Activated CD8-positive, alpha-beta T cell treated with anti-CD3 and anti-CD28 coated beads, Interleukin-2, amount 10 ng/mL, durations not matched to agents 7 days and 5 days (primary cell): ENCODE measurements at regions of chr18 and their contacts with region 1.

Region 1: DNA sequence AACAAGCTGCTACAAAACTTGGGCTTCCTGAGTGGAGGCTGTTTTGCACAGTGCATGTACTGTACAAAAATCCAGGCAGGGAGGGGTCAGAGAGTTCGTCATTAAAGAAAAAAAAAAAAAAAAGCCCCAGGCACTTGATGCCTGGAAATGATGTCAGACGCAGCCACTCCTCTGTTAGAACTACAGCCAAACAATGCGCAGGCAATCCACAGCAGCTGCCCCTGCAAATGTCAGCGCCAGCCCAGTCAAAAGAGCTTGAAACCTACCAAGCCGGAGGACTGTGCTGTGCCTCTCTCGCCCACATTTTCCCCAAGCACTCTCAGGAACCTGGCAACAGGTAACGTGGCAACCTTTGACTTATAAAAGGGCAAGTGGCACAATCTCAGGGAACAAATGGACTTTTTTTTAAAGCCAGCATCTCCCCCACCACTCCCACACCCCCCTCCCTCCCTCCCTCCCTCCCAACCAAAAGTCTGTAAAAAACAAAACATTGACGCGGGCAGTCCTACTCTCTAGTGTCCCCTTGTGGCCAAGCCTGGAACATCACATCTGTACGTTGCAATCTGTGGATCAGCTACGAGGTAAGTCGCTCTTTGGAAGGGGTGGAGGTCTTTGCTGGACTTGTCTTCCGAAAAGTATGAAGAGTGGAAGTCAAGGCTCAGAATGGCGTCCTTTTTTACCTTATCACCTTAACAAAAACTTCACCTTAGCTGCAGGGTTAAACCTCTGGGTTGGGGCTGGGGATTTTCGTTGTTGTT is 144.1 kb downstream of the TGIF1 start:
- DNase-seq: peak; percentile 92
- ATAC-seq: peak; percentile 92
- H3K4me3 Mint-ChIP-seq: peak overlapping the region; percentile 93
- H3K27ac Mint-ChIP-seq: peak overlapping the region; percentile 98
- H3K4me1 Mint-ChIP-seq: peaks cover 54% of the 10 kb centered on the region
- H3K27me3 Mint-ChIP-seq: no peaks in the 10 kb centered on the region

Region 2: DNA sequence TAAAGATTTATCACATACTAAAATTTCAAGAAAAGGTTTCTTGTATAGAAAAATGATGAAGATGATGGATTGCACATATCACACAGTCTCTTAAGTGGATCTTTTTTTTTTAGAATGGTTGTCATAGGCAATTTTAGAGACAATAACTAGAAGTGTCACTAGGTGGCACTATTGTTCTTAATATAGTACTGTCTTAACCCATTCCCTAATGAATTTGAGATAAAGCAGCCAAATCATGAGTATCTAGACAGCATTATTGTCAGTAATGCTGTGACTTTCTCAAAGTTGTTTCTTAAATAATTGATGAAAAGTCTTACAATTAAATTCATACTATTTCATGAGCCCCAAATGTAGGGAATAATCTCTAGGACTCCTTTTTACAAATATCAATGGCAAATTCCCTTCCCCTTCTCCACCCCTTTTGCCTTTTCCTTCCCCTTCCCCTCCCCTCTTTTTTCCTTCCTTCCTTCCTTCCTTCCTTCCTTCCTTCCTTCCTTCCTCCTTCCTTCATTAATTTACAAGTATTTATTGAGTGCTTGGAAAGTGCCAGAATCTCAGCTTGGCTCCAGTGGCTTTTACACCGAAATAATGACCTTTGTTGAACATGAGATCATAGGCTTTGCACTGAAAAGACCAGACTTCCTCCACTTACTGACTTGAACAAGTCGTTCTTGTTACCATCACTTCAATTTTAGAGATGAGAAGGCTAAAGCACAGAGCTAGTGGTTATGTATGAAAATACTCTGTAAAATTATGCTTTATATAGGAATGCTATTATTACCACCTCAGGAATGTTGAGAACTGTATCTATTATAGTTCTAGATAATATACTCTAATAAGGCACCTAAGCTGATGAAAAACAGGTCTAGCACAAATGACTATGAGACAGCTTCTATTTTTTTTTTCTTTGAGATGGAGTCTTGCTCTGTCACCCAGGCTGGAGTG is 312.4 kb before region 1 on chr18:
- CTCF ChIA-PET with region 1: interaction called, 19 read pairs
- POLR2A ChIA-PET with region 1: no interaction called
- DNase-seq: no peak
- ATAC-seq: peak; percentile 82
- H3K4me3 Mint-ChIP-seq: no peak overlapping the region
- H3K27ac Mint-ChIP-seq: no peak overlapping the region
- H3K4me1 Mint-ChIP-seq: no peaks in the 10 kb centered on the region
- H3K27me3 Mint-ChIP-seq: peaks cover 5% of the 10 kb centered on the region

Region 3: DNA sequence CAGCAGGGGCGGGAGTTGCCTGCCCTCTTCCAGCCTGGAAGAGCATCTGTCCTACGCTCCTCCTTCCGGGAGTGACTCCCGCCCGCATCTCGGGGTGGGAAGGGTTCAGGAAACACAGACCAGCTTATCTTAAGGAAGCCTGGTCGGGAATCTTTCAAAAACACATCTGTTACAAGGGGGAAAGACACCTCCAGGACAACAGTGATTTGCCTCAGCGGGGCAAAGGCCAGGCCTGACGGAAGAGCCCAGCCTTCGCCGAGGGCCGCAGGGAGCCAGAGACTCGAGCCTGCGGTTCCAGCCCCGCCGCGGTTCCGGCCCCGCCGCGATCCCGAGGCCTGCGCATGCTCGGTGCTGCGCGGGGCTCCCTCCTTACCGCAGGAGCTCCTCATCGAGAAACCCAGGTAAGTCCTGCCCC is 182.2 kb before region 1 on chr18:
- CTCF ChIA-PET with region 1: no interaction called
- POLR2A ChIA-PET with region 1: no interaction called
- DNase-seq: peak; percentile 22
- ATAC-seq: peak; percentile 55
- H3K4me3 Mint-ChIP-seq: no peak overlapping the region
- H3K27ac Mint-ChIP-seq: no peak overlapping the region
- H3K4me1 Mint-ChIP-seq: peaks cover 10% of the 10 kb centered on the region
- H3K27me3 Mint-ChIP-seq: no peaks in the 10 kb centered on the region

Region 4: DNA sequence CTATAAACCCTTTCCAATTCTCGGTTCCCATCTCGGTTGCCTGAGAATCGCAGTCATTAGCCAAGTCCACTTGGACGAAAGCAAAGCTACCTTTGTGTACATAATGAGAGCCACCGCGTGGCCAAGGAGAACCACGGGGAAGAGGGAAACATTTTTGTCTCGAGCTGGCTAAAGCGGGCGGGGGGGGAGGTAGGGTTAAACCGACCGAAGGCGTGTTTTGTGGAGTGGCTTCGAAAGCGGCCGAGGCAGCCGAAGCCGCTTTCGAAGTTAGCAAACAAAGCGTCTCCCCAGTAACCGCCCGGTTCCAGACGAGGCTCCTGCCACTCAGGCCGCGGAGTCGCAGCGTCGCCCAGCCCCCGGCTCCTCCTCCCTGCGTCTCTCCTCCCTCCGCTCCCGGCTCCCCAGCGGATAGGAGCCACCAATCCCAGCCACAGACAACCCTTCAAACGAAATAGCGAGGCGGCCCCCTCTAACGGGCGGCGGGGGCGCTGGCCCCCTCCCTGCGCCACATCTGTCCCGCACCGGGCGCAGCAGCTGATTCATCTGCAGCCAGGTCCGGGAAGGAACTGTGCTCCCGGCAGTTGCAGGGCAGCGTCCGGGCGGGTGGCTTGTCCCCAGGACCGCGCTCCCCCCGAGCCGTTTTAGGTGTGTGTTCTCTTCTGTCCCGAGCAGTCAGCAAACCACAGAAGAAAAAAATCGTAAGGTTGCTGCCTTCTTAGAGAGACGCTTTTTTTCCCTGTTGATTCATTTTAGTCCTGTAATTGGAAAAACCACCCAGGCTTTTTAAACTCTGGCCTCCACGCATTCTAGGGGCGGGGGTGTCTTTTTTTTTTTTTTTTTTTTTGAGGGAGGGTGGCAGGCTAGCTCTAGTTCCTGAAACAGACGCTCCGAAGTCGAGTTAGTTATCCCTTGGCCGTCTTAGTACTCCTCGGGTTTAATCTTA is 145.9 kb before region 1 on chr18:
- CTCF ChIA-PET with region 1: interaction called, 84 read pairs
- POLR2A ChIA-PET with region 1: interaction called, 40 read pairs
- DNase-seq: peak; percentile 90
- ATAC-seq: peak; percentile 72
- H3K4me3 Mint-ChIP-seq: peak overlapping the region; percentile 95
- H3K27ac Mint-ChIP-seq: peak overlapping the region; percentile 93
- H3K4me1 Mint-ChIP-seq: peaks cover 25% of the 10 kb centered on the region
- H3K27me3 Mint-ChIP-seq: peaks cover under 1% of the 10 kb centered on the region

Region 5: GRCh38 chr18:3620146-3621119 is 26.4 kb after region 1 on chr18:
- CTCF ChIA-PET with region 1: interaction called, 3 read pairs
- POLR2A ChIA-PET with region 1: interaction called, 11 read pairs
- DNase-seq: no peak
- ATAC-seq: no peak
- H3K4me3 Mint-ChIP-seq: no peak overlapping the region
- H3K27ac Mint-ChIP-seq: no peak overlapping the region
- H3K4me1 Mint-ChIP-seq: peaks cover 32% of the 10 kb centered on the region
- H3K27me3 Mint-ChIP-seq: no peaks in the 10 kb centered on the region

Region 6: GRCh38 chr18:3703732-3704176 is 109.7 kb after region 1 on chr18:
- CTCF ChIA-PET with region 1: no interaction called
- POLR2A ChIA-PET with region 1: no interaction called
- DNase-seq: peak; percentile 27
- ATAC-seq: no peak
- H3K4me3 Mint-ChIP-seq: no peak overlapping the region
- H3K27ac Mint-ChIP-seq: no peak overlapping the region
- H3K4me1 Mint-ChIP-seq: no peaks in the 10 kb centered on the region
- H3K27me3 Mint-ChIP-seq: peaks cover 12% of the 10 kb centered on the region

Region 7: GRCh38 chr18:3748086-3748485 is 154.0 kb after region 1 on chr18:
- CTCF ChIA-PET with region 1: no interaction called
- POLR2A ChIA-PET with region 1: no interaction called
- DNase-seq: no peak
- ATAC-seq: no peak
- H3K4me3 Mint-ChIP-seq: no peak overlapping the region
- H3K27ac Mint-ChIP-seq: no peak overlapping the region
- H3K4me1 Mint-ChIP-seq: no peaks in the 10 kb centered on the region
- H3K27me3 Mint-ChIP-seq: no peaks in the 10 kb centered on the region